ENCODE measurements at regions of chr11 and their contacts with region 1.

Region 1: GRCh38 chr11:72430741-72431570 is 3.4 kb downstream of the CLPB start:
- DNase-seq: peak; percentile 64 to 66
- ATAC-seq: peak; percentile 36 to 61; a peak in 5 of 6 replicates
- H3K4me3 ChIP-seq: no peak overlapping the region
- H3K27ac ChIP-seq: no peak overlapping the region
- H3K4me1 ChIP-seq: 0 out of 3 replicates have a peak, but pooled peaks cover 3% of the 10 kb centered on the region
- CTCF ChIP-seq: peak; percentile 78
- EP300 ChIP-seq: no peak
- POLR2A ChIP-seq: no peak
- RAD21 ChIP-seq: peak; percentile 82 to 87

Region 2: GRCh38 chr11:72004936-72005500 is 425.9 kb before region 1 on chr11:
- CTCF ChIA-PET with region 1: interaction called, 10 read pairs
- POLR2A ChIA-PET with region 1: no interaction called
- DNase-seq: no peak
- ATAC-seq: no peak
- H3K4me3 ChIP-seq: no peak overlapping the region
- H3K27ac ChIP-seq: no peak overlapping the region
- H3K4me1 ChIP-seq: no peaks in the 10 kb centered on the region
- CTCF ChIP-seq: no peak
- EP300 ChIP-seq: no peak
- POLR2A ChIP-seq: no peak
- RAD21 ChIP-seq: no peak

Region 3: DNA sequence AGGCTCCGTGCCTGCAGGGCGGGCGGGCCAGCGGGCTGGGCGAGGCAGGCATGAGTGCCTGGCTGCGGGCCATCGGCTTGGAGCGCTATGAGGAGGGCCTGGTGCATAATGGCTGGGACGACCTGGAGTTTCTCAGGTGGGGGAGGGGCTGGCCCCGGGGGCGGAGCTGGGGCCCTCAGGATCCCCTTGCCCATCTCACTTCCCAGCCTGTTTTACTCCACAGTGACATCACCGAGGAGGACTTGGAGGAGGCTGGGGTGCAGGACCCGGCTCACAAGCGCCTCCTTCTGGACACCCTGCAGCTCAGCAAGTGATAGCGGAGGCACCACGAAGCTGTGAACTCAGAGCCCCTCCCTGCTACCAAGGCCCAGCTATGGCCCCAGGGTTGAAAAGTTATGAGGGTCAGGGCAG is 192.9 kb before region 1 on chr11:
- CTCF ChIA-PET with region 1: interaction called, 10 read pairs
- POLR2A ChIA-PET with region 1: no interaction called
- DNase-seq: peak; percentile 82 to 92
- ATAC-seq: peak; percentile 70 to 86
- H3K4me3 ChIP-seq: no peak overlapping the region
- H3K27ac ChIP-seq: no peak overlapping the region
- H3K4me1 ChIP-seq: peaks cover 12% of the 10 kb centered on the region
- CTCF ChIP-seq: peak; percentile 71
- EP300 ChIP-seq: no peak
- POLR2A ChIP-seq: no peak
- RAD21 ChIP-seq: peak; percentile 63 to 65

Region 4: GRCh38 chr11:72314600-72315392 is 116.2 kb before region 1 on chr11:
- CTCF ChIA-PET with region 1: interaction called, 11 read pairs
- POLR2A ChIA-PET with region 1: no interaction called
- DNase-seq: no peak
- ATAC-seq: no peak
- H3K4me3 ChIP-seq: no peak overlapping the region
- H3K27ac ChIP-seq: no peak overlapping the region
- H3K4me1 ChIP-seq: no peaks in the 10 kb centered on the region
- CTCF ChIP-seq: no peak
- EP300 ChIP-seq: no peak
- POLR2A ChIP-seq: no peak
- RAD21 ChIP-seq: no peak

Region 5: DNA sequence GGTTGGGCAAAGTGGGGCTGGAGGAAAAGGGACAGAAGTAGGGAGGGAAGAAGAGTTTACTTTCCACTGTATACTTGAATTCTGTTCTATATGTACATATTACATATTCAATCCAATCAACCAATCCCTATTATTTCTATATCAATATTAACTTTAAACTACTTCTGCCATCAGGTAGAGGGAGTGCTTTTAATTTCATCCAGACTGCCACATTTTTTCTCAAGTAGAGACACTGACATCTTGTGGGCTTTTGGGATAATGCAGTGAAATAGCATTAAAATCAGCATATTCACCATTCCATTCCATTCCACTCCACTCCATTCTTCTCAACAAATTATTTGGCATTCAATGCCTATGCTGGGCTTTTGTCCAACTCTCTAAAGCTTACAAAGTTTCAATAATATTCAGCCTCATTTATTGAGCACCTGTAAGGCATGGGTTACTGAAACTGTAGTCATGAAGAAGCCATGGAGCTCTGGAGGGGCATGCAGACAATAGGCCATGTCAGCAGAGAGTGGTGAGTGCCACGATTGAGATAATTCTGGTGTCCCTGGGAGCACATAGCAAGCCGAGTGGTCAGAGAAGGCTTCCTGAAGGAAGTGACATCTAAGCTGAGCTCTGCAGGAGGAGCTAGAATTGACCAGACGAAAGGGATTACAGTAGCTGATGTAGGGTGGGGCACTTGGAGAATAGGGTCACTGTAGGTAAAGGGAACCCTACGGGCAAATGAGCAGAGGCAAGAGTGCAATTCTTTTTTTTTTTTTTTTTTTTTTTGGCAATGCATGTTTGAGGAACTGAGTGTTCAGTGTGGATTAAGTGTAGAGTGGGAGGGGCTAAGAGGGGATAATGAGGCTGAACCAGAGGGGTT is 16.2 kb after region 1 on chr11:
- CTCF ChIA-PET with region 1: interaction called, 124 read pairs
- POLR2A ChIA-PET with region 1: no interaction called
- DNase-seq: peak; percentile 76 to 83
- ATAC-seq: peak; percentile 85 to 89
- H3K4me3 ChIP-seq: no peak overlapping the region
- H3K27ac ChIP-seq: no peak overlapping the region
- H3K4me1 ChIP-seq: no peaks in the 10 kb centered on the region
- CTCF ChIP-seq: peak; percentile 82
- EP300 ChIP-seq: no peak
- POLR2A ChIP-seq: no peak
- RAD21 ChIP-seq: peak; percentile 59 to 65

Region 6: DNA sequence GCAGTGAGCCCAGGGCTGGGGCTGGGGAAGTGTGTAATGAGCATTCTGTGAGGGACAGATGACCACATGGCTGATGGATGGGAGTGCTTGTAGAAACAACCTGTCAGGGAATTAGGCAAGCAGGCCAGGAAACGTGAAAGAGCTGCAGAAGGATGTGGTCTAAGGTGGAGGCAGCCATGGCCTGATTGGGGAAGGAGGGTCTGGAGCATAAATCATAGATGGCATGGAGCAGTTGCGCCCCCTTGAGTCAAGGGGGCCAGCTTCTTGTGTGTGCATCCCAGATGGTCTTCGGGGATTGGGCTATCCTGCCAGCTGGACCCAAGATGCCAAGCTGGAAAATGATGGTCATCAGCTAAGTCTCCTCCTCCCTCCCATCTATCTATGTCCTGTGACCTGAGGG is 122.8 kb after region 1 on chr11:
- CTCF ChIA-PET with region 1: no interaction called
- POLR2A ChIA-PET with region 1: no interaction called
- DNase-seq: peak in 1 of 2 experiments; percentile 35
- ATAC-seq: peak in 1 of 2 experiments; percentile 76; a peak in 3 of 6 replicates
- H3K4me3 ChIP-seq: no peak overlapping the region
- H3K27ac ChIP-seq: no peak overlapping the region
- H3K4me1 ChIP-seq: no peaks in the 10 kb centered on the region
- CTCF ChIP-seq: no peak; the same call in 2 of the 3 replicates
- EP300 ChIP-seq: no peak
- POLR2A ChIP-seq: no peak
- RAD21 ChIP-seq: peak in 1 of 2 experiments; percentile 48; a peak in 2 of 5 replicates

Region 7: GRCh38 chr11:72642884-72643511 is 212.0 kb after region 1 on chr11:
- CTCF ChIA-PET with region 1: no interaction called
- POLR2A ChIA-PET with region 1: no interaction called
- DNase-seq: peak; percentile 65 to 80
- ATAC-seq: peak; percentile 59 to 86
- H3K4me3 ChIP-seq: peak overlapping the region; percentile 68
- H3K27ac ChIP-seq: peak overlapping the region; percentile 58 to 91
- H3K4me1 ChIP-seq: peaks cover 16% of the 10 kb centered on the region
- CTCF ChIP-seq: peak; percentile 96
- EP300 ChIP-seq: no peak
- POLR2A ChIP-seq: no peak
- RAD21 ChIP-seq: peak; percentile 64 to 88

Measured in A549 (cell line).